CD4-positive, alpha-beta T cell (primary cell): ENCODE measurements at regions of chr3 and their contacts with region 1.

Region 1: DNA sequence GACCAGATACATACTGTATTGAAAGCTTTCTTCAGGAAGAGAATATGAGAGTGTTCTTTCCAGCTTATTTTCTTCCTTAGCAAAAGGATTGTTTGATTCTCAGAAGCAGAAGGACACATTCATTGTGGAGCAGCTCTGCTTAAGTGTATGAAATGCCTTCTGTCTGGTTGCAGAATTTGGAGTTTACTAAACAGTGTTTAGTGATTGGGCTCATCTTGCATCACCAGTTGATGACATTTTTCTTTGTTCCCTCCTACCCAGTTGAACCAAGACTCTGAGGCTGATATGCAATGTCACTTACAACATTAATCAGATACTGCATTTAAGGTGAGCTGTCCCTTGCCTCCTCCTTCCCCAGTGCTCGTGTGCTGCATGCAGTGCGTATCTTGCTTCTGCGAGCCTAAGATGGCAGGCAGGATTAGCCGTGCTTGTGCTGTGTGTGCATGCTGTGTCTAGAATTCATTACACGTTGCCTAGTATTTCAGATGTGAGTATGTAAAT is 18.4 kb downstream of the ZBTB38 start:
- DNase-seq: peak in 1 of 14 experiments; percentile 44
- ATAC-seq: peak; percentile 54
- H3K4me3 ChIP-seq: peak overlapping the region; percentile 47
- H3K4me3 Mint-ChIP-seq: peak overlapping the region; percentile 69
- H3K27ac ChIP-seq: no peak overlapping the region
- H3K27ac Mint-ChIP-seq: peak overlapping the region; percentile 47
- H3K4me1 ChIP-seq: peaks cover 8% of the 10 kb centered on the region
- H3K4me1 Mint-ChIP-seq: peaks cover 6% of the 10 kb centered on the region
- H3K27me3 ChIP-seq: no peaks in the 10 kb centered on the region
- H3K27me3 Mint-ChIP-seq: no peaks in the 10 kb centered on the region
- CTCF ChIP-seq: no peak

Region 2: DNA sequence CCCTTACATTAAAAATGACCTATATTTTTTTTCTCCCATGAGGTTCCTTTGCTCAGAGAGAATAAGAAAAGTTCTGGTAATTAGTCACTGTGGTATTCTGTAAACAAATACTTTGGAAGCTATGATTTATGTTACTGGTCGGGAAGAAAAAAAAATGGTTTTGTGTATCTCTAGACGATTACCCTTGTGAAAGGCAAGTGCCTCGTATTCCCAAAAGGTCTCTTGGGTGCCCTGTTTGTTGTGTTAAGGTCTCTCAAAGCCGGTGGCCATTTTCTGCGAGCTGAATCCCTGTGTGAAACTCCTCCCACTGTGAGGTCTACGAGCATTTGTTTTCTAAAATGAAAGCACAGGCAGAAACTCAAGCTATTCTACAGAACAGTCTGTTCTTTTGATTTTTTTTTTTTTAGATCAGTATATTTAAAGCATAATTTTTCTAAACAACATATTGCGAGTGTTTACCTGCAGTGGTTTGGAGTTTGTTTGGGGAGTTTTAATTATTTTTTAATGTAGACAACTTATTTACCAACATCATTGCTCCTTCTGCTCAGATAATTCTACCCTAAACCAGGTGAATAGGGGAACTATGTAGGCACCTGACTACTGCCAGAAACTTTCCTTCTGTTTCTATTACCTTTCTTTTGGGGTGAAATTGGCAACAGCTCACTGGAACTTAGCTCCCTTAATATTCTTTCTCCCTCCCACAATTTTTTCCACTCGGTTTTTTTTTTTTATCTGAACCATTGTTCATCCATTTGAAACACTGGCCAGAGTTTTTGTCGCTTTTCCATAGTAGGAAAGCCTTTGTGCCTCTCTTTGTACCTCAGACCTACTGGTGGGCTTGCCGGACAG is 25.6 kb after region 1 on chr3:
- CTCF ChIA-PET with region 1: interaction called, 3 read pairs
- POLR2A ChIA-PET with region 1: interaction called, 28 read pairs
- intact Hi-C with region 1: no loop called
- DNase-seq: peak; percentile 33 to 87 (median 48)
- ATAC-seq: peak; percentile 69
- H3K4me3 ChIP-seq: peak overlapping the region; percentile 31
- H3K4me3 Mint-ChIP-seq: peak overlapping the region; percentile 82
- H3K27ac ChIP-seq: peak overlapping the region; percentile 65 to 87
- H3K27ac Mint-ChIP-seq: peak overlapping the region; percentile 98
- H3K4me1 ChIP-seq: peaks cover 67% of the 10 kb centered on the region
- H3K4me1 Mint-ChIP-seq: peaks cover 80% of the 10 kb centered on the region
- H3K27me3 ChIP-seq: no peaks in the 10 kb centered on the region
- H3K27me3 Mint-ChIP-seq: no peaks in the 10 kb centered on the region
- CTCF ChIP-seq: no peak

Region 3: DNA sequence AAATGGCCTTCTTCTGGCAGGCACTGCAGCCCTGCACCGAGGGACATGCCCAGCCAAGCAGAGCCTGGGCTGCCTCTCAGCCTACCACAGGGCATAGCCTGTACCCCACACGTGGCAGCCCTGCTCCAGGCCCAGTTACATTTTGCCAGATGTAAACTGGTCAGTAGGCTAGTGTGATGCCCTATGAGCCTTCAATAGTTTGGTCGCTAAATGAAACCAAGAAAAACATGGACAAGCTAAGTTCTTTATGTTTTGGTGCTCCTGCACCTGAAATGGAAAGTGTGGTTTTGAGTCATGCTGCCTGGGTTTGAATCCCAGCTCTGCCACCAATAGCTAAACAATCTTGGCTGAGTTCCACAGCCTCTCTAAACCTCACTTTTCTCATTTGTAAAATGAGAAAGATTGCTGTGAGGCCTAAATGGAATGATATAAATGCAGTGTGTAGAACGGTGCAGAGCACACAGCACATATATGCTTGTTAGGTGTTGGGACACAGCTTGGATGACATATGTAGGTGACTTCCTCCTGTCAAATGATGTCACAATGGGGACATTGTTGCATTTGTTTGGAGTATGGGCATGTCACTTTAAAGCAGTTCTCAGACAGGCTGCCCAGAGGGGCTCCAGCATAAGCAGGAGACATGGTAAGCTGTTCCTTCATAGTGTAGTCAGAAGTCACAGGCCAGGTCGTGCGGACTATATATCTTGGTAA is 39.0 kb after region 1 on chr3:
- CTCF ChIA-PET with region 1: no interaction called
- POLR2A ChIA-PET with region 1: no interaction called
- intact Hi-C with region 1: no loop called
- DNase-seq: no peak
- ATAC-seq: no peak
- H3K4me3 ChIP-seq: no peak overlapping the region
- H3K4me3 Mint-ChIP-seq: no peak overlapping the region
- H3K27ac ChIP-seq: no peak overlapping the region
- H3K27ac Mint-ChIP-seq: no peak overlapping the region
- H3K4me1 ChIP-seq: peaks cover 22% of the 10 kb centered on the region
- H3K4me1 Mint-ChIP-seq: peaks cover 44% of the 10 kb centered on the region
- H3K27me3 ChIP-seq: no peaks in the 10 kb centered on the region
- H3K27me3 Mint-ChIP-seq: no peaks in the 10 kb centered on the region
- CTCF ChIP-seq: no peak